ENCODE measurements at regions of chr3 and their contacts with region 1.

Region 1: DNA sequence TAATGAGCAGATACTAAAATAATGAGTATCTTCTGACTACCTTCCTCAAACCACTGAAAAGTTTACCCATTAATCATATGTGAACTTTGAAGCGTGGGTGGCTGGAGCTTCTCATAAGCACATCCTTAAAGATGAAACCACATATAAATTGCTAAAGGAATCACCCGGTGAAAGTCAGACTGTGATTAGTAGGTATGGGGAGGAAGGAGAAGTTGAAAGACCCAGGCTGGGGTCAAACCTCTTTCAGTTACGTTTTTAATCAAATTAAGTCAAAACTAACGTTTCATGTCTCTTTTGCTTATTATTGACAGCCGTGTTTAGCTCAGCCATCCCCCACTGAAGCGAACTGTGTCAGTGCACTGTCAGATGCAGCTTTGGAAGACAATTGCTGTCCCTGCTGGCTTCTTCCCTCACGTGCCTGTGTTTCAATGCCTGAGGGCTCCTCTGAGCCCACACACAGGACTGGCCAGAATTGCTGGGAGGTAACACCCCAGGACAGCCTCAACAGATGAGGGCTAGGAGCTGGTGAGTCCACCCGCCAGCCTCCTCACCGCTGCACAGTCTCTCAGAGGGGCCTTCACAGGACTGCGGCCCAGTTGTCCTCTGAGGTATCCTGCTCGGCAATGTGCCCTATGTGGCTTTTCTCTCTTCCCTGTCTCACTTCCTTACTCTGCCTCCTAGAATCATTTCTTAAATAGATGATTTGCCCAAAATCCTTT is 29.3 kb upstream of the SH3BP5 start:
- DNase-seq: peak; percentile 85
- H3K4me3 Mint-ChIP-seq: peak overlapping the region; percentile 48
- H3K27ac Mint-ChIP-seq: peak overlapping the region; percentile 85
- H3K4me1 Mint-ChIP-seq: peaks cover 54% of the 10 kb centered on the region
- H3K27me3 Mint-ChIP-seq: no peaks in the 10 kb centered on the region

Region 2: GRCh38 chr3:15205934-15206661 is 155.6 kb before region 1 on chr3 and contains the start of gene CAPN7:
- CTCF ChIA-PET with region 1: no interaction called
- POLR2A ChIA-PET with region 1: no interaction called
- intact Hi-C with region 1: no loop called
- DNase-seq: peak; percentile 96
- H3K4me3 Mint-ChIP-seq: peak within 1 kb of the TSS; percentile 81
- H3K27ac Mint-ChIP-seq: peak within 1 kb of the TSS; percentile 82
- H3K4me1 Mint-ChIP-seq: peaks cover 29% of the 10 kb centered on the region
- H3K27me3 Mint-ChIP-seq: no peaks in the 10 kb centered on the region
- total RNA-seq, gene CAPN7: 23.6 to 28.1 TPM

Region 3: GRCh38 chr3:15291589-15292541 is 69.8 kb before region 1 on chr3:
- CTCF ChIA-PET with region 1: interaction called, 4 read pairs
- POLR2A ChIA-PET with region 1: interaction called, 26 read pairs
- intact Hi-C with region 1: loop called (anchors 1 kb)
- DNase-seq: peak; percentile 83
- H3K4me3 Mint-ChIP-seq: peak overlapping the region; percentile 42
- H3K27ac Mint-ChIP-seq: peak overlapping the region; percentile 87
- H3K4me1 Mint-ChIP-seq: peaks cover 77% of the 10 kb centered on the region
- H3K27me3 Mint-ChIP-seq: no peaks in the 10 kb centered on the region

Region 4: GRCh38 chr3:15300323-15301078 is 61.2 kb before region 1 on chr3:
- CTCF ChIA-PET with region 1: interaction called, 8 read pairs
- POLR2A ChIA-PET with region 1: interaction called, 26 read pairs
- intact Hi-C with region 1: loop called (anchors 1 kb)
- DNase-seq: peak; percentile 37
- H3K4me3 Mint-ChIP-seq: no peak overlapping the region
- H3K27ac Mint-ChIP-seq: peak overlapping the region; percentile 71
- H3K4me1 Mint-ChIP-seq: peaks cover 81% of the 10 kb centered on the region
- H3K27me3 Mint-ChIP-seq: no peaks in the 10 kb centered on the region

Region 5: GRCh38 chr3:15309662-15310335 is 51.9 kb before region 1 on chr3:
- CTCF ChIA-PET with region 1: interaction called, 3 read pairs
- POLR2A ChIA-PET with region 1: interaction called, 20 read pairs
- intact Hi-C with region 1: loop called (anchors 1 kb)
- DNase-seq: peak; percentile 82
- H3K4me3 Mint-ChIP-seq: peak overlapping the region; percentile 61
- H3K27ac Mint-ChIP-seq: peak overlapping the region; percentile 98
- H3K4me1 Mint-ChIP-seq: peaks cover 78% of the 10 kb centered on the region
- H3K27me3 Mint-ChIP-seq: no peaks in the 10 kb centered on the region

Region 6: GRCh38 chr3:15319575-15319974 is 42.1 kb before region 1 on chr3:
- CTCF ChIA-PET with region 1: interaction called, 4 read pairs
- POLR2A ChIA-PET with region 1: interaction called, 16 read pairs
- intact Hi-C with region 1: no loop called
- DNase-seq: no peak
- H3K4me3 Mint-ChIP-seq: no peak overlapping the region
- H3K27ac Mint-ChIP-seq: peak overlapping the region; percentile 52
- H3K4me1 Mint-ChIP-seq: peaks cover 83% of the 10 kb centered on the region
- H3K27me3 Mint-ChIP-seq: no peaks in the 10 kb centered on the region